Activated B cell treated with CpG ODN at 0.5 μM for 24 hours (primary cell): ENCODE measurements at regions of chr11 and their contacts with region 1.

Region 1: DNA sequence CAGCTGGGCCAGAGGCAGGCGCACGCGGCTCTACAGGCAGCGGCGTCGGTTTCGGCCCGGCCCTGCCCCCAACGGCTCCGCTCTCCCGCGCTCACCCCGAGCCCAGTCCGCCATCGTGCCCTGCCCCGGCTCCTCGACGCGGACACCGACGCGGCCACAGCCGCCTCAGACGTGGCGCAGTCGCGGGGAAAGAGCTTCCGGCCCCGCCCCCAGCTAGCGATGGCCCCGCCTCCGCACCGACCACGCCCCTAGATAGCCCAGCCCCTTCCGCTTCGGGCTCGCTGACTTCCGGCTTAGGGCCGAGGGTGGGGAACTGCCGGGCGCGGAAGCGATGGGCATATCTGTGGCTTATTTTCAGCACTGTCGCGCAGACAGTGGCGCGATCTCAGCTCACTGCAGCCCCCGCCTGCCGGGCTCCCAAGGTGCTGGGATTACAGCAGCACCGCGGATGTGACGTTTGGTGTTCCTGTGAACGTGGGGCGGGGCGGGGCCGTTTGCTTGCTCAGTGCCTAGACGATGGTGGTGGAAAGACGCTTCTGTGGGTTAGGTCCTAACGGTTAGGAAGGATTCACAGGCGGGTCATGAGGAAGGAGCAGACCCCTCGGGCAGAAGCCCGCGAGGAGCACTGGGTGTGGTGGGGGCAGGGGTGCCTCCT is at the starts of genes BET1L and RIC8A:
- DNase-seq: peak; percentile 95
- ATAC-seq: peak; percentile 82
- H3K4me3 Mint-ChIP-seq: peak within 1 kb of the TSS; percentile 97
- H3K27ac Mint-ChIP-seq: peak within 1 kb of the TSS; percentile 99
- H3K4me1 Mint-ChIP-seq: peaks cover 46% of the 10 kb centered on the region
- H3K27me3 Mint-ChIP-seq: no peaks in the 10 kb centered on the region
- CTCF ChIP-seq: no peak
- total RNA-seq, gene BET1L: 44.2 and 47.0 TPM in 2 replicates
- total RNA-seq, gene RIC8A: 108 and 114 TPM in 2 replicates

Region 2: DNA sequence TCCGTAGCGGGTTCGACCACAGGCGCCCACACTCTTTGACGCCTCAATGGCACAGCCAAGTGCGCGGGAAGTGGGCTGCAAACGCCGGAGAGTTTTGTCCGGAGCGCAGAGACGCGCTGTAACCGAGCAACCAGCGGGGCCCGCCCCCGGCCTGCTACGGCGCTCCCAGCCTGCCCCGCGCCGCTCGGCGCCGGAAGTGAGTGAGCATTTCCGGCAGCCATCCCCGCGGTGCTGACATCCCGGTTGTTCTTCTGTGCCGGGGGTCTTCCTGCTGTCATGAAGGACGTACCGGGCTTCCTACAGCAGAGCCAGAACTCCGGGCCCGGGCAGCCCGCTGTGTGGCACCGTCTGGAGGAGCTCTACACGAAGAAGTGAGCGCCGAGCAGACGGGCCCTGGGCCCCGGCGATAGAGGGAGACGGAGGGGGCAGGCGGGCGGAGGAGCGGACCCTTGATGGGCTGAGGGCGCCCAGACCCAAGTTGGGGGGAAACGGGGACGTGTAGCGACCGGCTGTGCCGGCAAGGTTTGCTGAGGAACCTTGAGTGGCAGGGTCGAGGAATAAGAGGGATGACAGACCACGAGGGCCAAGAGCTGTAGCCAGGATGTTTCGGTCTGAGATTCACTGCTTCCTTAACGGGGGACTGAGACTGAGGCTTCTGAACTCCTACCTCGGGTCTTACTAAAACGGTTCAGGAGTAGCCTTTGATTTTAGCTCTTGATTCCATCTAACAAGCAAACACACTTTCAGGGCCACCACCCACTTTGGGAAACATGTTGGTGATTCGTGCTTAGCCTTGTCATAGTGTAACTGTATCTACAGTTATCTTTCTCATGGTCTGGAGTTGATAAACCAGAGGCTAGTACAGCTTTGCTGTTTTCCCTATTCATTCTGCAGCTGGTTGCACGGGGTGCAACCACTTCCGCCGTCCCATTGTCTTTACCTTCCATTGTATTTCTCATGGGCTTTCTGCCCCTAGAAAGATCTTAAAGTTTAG is 29.7 kb after region 1 on chr11 and contains the start of gene PSMD13:
- CTCF ChIA-PET with region 1: interaction called, 5 read pairs
- POLR2A ChIA-PET with region 1: interaction called, 55 read pairs
- intact Hi-C with region 1: loop called (anchors 1 kb)
- DNase-seq: peak; percentile 85
- ATAC-seq: peak; percentile 78
- H3K4me3 Mint-ChIP-seq: peak within 1 kb of the TSS; percentile 98
- H3K27ac Mint-ChIP-seq: peak within 1 kb of the TSS; percentile 99
- H3K4me1 Mint-ChIP-seq: peaks cover 41% of the 10 kb centered on the region
- H3K27me3 Mint-ChIP-seq: no peaks in the 10 kb centered on the region
- CTCF ChIP-seq: no peak
- total RNA-seq, gene PSMD13: 147 and 149 TPM in 2 replicates

Region 3: DNA sequence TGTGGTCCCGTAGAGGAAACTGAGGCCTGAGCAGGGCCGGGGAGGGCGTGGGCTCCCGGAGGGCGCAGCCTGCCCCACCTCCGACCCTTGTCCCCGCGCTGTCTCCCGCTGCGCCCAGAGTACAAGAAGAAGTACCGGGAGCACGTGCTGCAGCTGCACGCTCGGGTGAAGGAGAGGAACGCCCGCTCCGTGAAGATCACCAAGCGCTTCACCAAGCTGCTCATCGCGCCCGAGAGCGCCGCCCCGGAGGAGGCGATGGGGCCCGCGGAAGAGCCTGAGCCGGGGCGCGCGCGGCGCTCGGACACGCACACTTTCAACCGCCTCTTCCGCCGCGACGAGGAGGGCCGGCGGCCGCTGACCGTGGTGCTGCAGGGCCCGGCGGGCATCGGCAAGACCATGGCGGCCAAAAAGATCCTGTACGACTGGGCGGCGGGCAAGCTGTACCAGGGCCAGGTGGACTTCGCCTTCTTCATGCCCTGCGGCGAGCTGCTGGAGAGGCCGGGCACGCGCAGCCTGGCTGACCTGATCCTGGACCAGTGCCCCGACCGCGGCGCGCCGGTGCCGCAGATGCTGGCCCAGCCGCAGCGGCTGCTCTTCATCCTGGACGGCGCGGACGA is 72.7 kb after region 1 on chr11:
- CTCF ChIA-PET with region 1: no interaction called
- POLR2A ChIA-PET with region 1: interaction called, 18 read pairs
- intact Hi-C with region 1: no loop called
- DNase-seq: peak; percentile 43
- ATAC-seq: peak; percentile 71
- H3K4me3 Mint-ChIP-seq: peak overlapping the region; percentile 74
- H3K27ac Mint-ChIP-seq: no peak overlapping the region
- H3K4me1 Mint-ChIP-seq: peaks cover 32% of the 10 kb centered on the region
- H3K27me3 Mint-ChIP-seq: peaks cover 19% of the 10 kb centered on the region
- CTCF ChIP-seq: no peak

Region 4: GRCh38 chr11:355581-356458 is 148.5 kb after region 1 on chr11:
- CTCF ChIA-PET with region 1: no interaction called
- POLR2A ChIA-PET with region 1: interaction called, 26 read pairs
- intact Hi-C with region 1: loop called (anchors 1 kb)
- DNase-seq: peak; percentile 70
- ATAC-seq: peak; percentile 72
- H3K4me3 Mint-ChIP-seq: peak overlapping the region; percentile 77
- H3K27ac Mint-ChIP-seq: peak overlapping the region; percentile 90
- H3K4me1 Mint-ChIP-seq: peaks cover 26% of the 10 kb centered on the region
- H3K27me3 Mint-ChIP-seq: no peaks in the 10 kb centered on the region
- CTCF ChIP-seq: no peak

Region 5: DNA sequence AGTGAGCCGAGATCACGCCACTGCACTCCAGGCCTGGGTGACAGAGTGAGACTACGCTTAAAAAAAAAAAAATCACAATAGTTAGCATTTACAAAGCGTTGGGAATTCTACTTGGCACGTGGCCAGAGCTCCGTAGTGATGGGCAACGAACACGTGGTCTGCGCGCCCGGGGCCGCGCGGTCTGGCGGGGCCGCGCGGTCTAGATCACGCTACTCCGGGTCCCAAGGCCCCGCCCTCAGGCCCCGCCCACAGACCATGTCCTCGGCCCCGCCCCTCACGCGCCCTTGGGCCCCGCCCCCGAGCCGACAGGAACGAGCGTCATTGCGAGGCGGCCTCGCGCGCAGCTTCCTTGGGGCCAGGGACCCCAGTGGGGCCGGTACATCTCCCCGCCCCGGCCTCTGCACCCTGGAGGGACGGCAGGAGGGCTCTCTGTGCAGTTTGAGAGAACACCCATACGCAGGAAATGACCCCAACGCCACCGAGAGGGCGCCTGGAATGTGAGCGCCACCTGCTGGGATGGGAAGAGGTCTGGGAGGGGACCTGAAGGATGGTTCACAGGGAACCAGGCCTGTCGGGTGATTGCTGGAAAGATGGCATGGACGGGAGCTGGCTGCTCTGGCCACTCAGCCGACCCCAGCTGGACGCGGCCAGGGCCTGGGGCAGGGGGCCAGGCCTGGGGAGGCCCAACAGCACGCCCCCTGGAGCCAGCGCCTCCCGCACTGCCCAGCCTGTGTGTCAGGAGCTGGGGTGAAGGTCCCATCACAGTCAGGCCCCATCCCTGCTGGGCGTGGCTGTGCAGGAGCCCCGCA is 240.8 kb after region 1 on chr11:
- CTCF ChIA-PET with region 1: interaction called, 3 read pairs
- POLR2A ChIA-PET with region 1: interaction called, 11 read pairs
- intact Hi-C with region 1: loop called (anchors 1 kb)
- DNase-seq: peak; percentile 97
- ATAC-seq: peak; percentile 75
- H3K4me3 Mint-ChIP-seq: peak overlapping the region; percentile 94
- H3K27ac Mint-ChIP-seq: peak overlapping the region; percentile 95
- H3K4me1 Mint-ChIP-seq: peaks cover 34% of the 10 kb centered on the region
- H3K27me3 Mint-ChIP-seq: no peaks in the 10 kb centered on the region
- CTCF ChIP-seq: no peak

Region 6: GRCh38 chr11:809287-810039 is 602.1 kb after region 1 on chr11 and contains the start of gene RPLP2:
- CTCF ChIA-PET with region 1: no interaction called
- POLR2A ChIA-PET with region 1: no interaction called
- intact Hi-C with region 1: loop called (anchors 1 kb)
- DNase-seq: peak; percentile 97
- ATAC-seq: peak; percentile 82
- H3K4me3 Mint-ChIP-seq: peak within 1 kb of the TSS; percentile 91
- H3K27ac Mint-ChIP-seq: peak within 1 kb of the TSS; percentile 98
- H3K4me1 Mint-ChIP-seq: peaks cover 37% of the 10 kb centered on the region
- H3K27me3 Mint-ChIP-seq: no peaks in the 10 kb centered on the region
- CTCF ChIP-seq: no peak
- total RNA-seq, gene RPLP2: 4,124 and 4,449 TPM in 2 replicates